Breast epithelium (tissue), 4 donors: ENCODE measurements at regions of chr7 and their contacts with region 1.

Region 1: DNA sequence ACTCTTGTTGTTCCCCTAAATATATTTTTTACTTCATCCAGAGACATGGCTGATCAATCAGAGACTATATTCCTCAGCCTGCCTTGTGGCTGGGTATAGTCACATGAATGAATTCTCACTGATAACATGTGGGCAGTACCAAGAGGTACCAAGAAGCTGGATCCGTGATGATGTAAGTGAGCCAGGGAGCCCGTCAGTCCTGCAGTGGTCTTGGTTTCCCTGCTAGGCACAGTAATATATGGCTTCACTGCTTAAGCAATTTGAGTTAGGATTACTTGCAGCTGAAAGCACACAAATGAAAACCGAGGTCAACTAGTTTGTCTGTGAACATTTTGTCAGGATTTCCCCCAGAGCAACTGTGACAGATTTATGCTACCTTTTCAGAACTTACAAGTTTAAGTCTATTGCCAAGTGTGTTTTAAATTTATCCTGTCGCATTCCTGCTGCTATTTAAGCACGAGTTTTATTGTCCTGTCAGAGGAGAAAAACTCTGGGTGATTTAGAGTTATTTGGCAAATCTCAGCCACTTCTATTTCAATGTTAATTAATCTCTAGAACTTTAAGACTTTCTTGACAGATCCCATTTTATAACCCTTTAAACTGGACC is 381.8 kb downstream of the PHF14 start:
- DNase-seq: no peak
- H3K4me3 ChIP-seq: no peak overlapping the region
- H3K27ac ChIP-seq: no peak overlapping the region
- H3K4me1 ChIP-seq: no peaks in the 10 kb centered on the region
- H3K27me3 ChIP-seq: no peaks in the 10 kb centered on the region
- CTCF ChIP-seq: no peak
- POLR2A ChIP-seq: no peak

Region 2: GRCh38 chr7:11315687-11316258 is 39.7 kb before region 1 on chr7:
- intact Hi-C with region 1: loop called (anchors 2 kb)
- DNase-seq: no peak
- H3K4me3 ChIP-seq: no peak overlapping the region
- H3K27ac ChIP-seq: no peak overlapping the region
- H3K4me1 ChIP-seq: no peaks in the 10 kb centered on the region
- H3K27me3 ChIP-seq: no peaks in the 10 kb centered on the region
- CTCF ChIP-seq: no peak
- POLR2A ChIP-seq: no peak

Region 3: DNA sequence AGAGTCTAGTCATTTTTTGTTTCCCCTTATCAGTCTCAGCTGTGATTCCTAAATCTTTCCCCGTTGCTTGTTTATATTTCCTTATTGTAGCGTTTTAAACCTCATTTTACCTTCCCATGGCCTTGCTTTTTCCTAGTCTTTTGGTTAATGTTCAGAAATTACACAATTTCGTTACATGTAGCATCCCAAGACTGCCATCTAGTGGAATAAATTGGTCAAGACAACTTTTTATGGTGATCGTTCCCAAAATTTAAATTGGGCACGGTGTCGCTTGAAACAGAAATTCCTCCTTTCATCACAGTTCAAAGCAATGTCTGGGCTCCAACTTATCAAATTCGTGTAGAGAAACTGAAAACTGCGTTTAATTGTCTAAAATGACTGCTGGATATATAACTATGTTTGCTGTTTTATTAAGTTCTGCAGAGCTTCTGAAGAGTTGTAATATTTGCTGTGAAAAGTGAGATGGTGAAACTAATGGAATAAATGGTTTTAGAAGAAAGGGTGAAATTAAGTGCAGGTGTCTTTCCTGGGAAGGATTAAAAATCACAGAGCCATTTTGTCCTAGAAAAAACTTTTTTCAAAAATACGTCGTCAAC is 11.6 kb before region 1 on chr7:
- intact Hi-C with region 1: no loop called
- DNase-seq: no peak
- H3K4me3 ChIP-seq: no peak overlapping the region
- H3K27ac ChIP-seq: no peak overlapping the region
- H3K4me1 ChIP-seq: no peaks in the 10 kb centered on the region
- H3K27me3 ChIP-seq: no peaks in the 10 kb centered on the region
- CTCF ChIP-seq: peak; percentile 27 to 71 (median 66)
- POLR2A ChIP-seq: no peak